GM10248 (cell line): ENCODE measurements at regions of chr15 and their contacts with region 1.

Region 1: GRCh38 chr15:56491110-56491722 is 26.3 kb upstream of the MNS1 start:
- DNase-seq: peak; percentile 73
- CTCF ChIP-seq: peak; percentile 93

Region 2: GRCh38 chr15:56464893-56465520 is 26.2 kb before region 1 on chr15 and contains the start of gene MNS1:
- CTCF ChIA-PET with region 1: interaction called, 12 read pairs
- POLR2A ChIA-PET with region 1: no interaction called
- DNase-seq: peak; percentile 94
- CTCF ChIP-seq: no peak

Region 3: GRCh38 chr15:56532721-56533460 is 41.7 kb after region 1 on chr15:
- CTCF ChIA-PET with region 1: interaction called, 14 read pairs
- POLR2A ChIA-PET with region 1: no interaction called
- DNase-seq: no peak
- CTCF ChIP-seq: no peak